ENCODE measurements at regions of chr9 and their contacts with region 1.

Region 1: GRCh38 chr9:134827559-134828392 is 52.8 kb upstream of the FCN2 start:
- DNase-seq: no peak
- ATAC-seq: no peak
- H3K4me3 ChIP-seq: no peak overlapping the region
- H3K4me3 Mint-ChIP-seq: no peak overlapping the region
- H3K27ac ChIP-seq: no peak overlapping the region
- H3K27ac Mint-ChIP-seq: no peak overlapping the region
- H3K4me1 ChIP-seq: no peaks in the 10 kb centered on the region
- H3K4me1 Mint-ChIP-seq: no peaks in the 10 kb centered on the region
- H3K27me3 ChIP-seq: no peaks in the 10 kb centered on the region
- H3K27me3 Mint-ChIP-seq: no peaks in the 10 kb centered on the region
- CTCF ChIP-seq: no peak

Region 2: GRCh38 chr9:134751622-134752021 is 76.2 kb before region 1 on chr9:
- CTCF ChIA-PET with region 1: no interaction called
- POLR2A ChIA-PET with region 1: no interaction called
- intact Hi-C with region 1: no loop called
- DNase-seq: no peak
- ATAC-seq: no peak
- H3K4me3 ChIP-seq: no peak overlapping the region
- H3K4me3 Mint-ChIP-seq: no peak overlapping the region
- H3K27ac ChIP-seq: no peak overlapping the region
- H3K27ac Mint-ChIP-seq: no peak overlapping the region
- H3K4me1 ChIP-seq: no peaks in the 10 kb centered on the region
- H3K4me1 Mint-ChIP-seq: no peaks in the 10 kb centered on the region
- H3K27me3 ChIP-seq: no peaks in the 10 kb centered on the region
- H3K27me3 Mint-ChIP-seq: no peaks in the 10 kb centered on the region
- CTCF ChIP-seq: no peak

Region 3: GRCh38 chr9:134796882-134797463 is 30.8 kb before region 1 on chr9:
- CTCF ChIA-PET with region 1: no interaction called
- POLR2A ChIA-PET with region 1: no interaction called
- intact Hi-C with region 1: loop called in 1 of 2 experiments (anchors 1 kb)
- DNase-seq: no peak
- ATAC-seq: no peak
- H3K4me3 ChIP-seq: no peak overlapping the region
- H3K4me3 Mint-ChIP-seq: no peak overlapping the region
- H3K27ac ChIP-seq: no peak overlapping the region
- H3K27ac Mint-ChIP-seq: no peak overlapping the region
- H3K4me1 ChIP-seq: no peaks in the 10 kb centered on the region
- H3K4me1 Mint-ChIP-seq: no peaks in the 10 kb centered on the region
- H3K27me3 ChIP-seq: peaks cover 0 to 3% of the 10 kb centered on the region in 2 experiments
- H3K27me3 Mint-ChIP-seq: peaks cover 4% of the 10 kb centered on the region
- CTCF ChIP-seq: no peak

Measured in CD4-positive, alpha-beta T cell (primary cell).